A673 (cell line): ENCODE measurements at regions of chr19 and their contacts with region 1.

Region 1: DNA sequence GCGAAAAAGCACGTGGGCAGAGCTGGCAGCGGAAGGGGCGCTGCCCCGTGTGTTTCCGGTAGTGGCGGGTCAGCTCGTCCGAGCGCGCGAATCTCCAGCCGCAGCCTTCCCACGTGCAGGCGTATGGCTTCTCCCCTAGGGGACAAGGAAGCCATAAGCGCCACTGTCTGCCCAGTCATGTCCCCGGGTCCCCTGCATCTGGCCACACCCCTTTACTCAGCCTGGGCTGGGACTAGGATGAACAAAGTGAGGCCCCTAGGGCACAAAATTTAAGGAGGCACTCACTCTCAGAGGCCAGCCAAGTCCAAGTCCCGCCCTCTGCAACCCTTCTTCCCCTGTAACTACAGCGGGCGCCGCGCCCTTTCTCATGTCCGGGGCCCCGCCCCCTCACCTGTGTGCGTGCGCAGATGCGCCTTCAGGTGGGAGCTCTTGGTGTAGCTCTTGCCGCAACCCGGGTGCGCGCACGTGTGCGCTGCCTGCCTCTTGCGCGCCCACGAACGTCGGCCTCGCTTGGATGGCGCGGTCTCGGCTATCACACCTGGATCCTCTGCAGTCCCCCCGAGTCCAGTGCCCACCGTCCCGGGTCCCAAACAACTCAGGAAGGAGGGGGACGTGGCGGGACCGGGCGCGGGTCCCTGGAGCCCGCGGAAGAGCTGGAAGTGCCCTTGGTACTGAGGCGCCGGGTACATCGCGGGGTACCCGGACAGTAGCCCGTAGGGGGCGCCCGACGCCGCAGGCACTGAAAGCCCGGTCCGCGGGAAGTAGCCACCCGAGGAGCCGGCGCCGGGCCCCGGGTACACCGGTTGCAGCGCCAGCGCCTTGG is 1.9 kb downstream of the KLF1 start:
- DNase-seq: peak; percentile 77
- H3K4me3 ChIP-seq: peak overlapping the region; percentile 46
- H3K27ac ChIP-seq: no peak overlapping the region
- H3K4me1 ChIP-seq: peaks cover 5% of the 10 kb centered on the region
- H3K27me3 ChIP-seq: no peaks in the 10 kb centered on the region
- CTCF ChIP-seq: peak; percentile 82

Region 2: GRCh38 chr19:12782229-12783028 is 102.7 kb before region 1 on chr19:
- CTCF ChIA-PET with region 1: no interaction called
- POLR2A ChIA-PET with region 1: no interaction called
- intact Hi-C with region 1: no loop called
- DNase-seq: peak; percentile 86
- H3K4me3 ChIP-seq: peak overlapping the region; percentile 57
- H3K27ac ChIP-seq: peak overlapping the region; percentile 96
- H3K4me1 ChIP-seq: peaks cover 49% of the 10 kb centered on the region
- H3K27me3 ChIP-seq: no peaks in the 10 kb centered on the region
- CTCF ChIP-seq: 0 out of 2 replicates have a peak, but pooled peaks have one; percentile 33

Region 3: DNA sequence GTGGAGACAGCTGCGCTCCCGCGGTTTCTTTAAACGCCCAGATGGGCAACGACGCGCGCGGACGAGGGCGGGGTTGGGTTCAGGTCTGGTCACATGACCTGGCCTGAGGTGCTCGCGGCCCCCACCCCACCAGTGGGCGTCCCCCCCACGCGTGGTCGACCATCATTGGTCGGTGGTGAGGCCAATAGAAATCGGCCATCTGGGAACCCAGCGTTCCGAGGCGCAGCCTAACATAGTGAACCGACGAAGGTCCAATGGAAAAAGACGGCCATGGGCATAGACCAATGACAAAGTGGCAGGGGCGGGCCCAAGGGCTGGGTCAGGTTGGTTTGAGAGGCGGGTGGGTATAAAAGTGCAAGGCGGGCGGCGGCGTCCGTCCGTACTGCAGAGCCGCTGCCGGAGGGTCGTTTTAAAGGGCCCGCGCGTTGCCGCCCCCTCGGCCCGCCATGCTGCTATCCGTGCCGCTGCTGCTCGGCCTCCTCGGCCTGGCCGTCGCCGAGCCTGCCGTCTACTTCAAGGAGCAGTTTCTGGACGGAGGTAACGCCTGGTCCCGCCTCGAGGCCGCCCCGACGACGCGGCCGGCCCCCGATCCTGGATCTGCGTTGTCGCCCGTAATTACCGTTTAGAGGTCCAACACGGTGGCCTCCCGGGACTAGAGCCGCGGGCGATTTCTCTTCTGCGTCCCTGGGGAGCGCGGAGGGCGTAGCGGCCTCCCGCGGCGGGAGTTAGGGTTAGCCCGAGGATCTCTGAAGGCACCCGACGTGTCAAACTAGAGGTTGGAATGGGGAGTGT is 53.3 kb after region 1 on chr19 and contains the start of gene CALR:
- CTCF ChIA-PET with region 1: no interaction called
- POLR2A ChIA-PET with region 1: interaction called, 28 read pairs
- intact Hi-C with region 1: no loop called
- DNase-seq: peak; percentile 100
- H3K4me3 ChIP-seq: peak within 1 kb of the TSS; percentile 91
- H3K27ac ChIP-seq: peak within 1 kb of the TSS; percentile 95
- H3K4me1 ChIP-seq: peaks cover 32% of the 10 kb centered on the region
- H3K27me3 ChIP-seq: no peaks in the 10 kb centered on the region
- CTCF ChIP-seq: 0 out of 2 replicates have a peak, but pooled peaks have one; percentile 18
- total RNA-seq, gene CALR: 994 and 1,019 TPM in 2 replicates